Activated CD4-positive, alpha-beta memory T cell treated with anti-CD3 and anti-CD28 coated beads for 36 hours (primary cell): ENCODE measurements at regions of chr10 and their contacts with region 1.

Region 1: DNA sequence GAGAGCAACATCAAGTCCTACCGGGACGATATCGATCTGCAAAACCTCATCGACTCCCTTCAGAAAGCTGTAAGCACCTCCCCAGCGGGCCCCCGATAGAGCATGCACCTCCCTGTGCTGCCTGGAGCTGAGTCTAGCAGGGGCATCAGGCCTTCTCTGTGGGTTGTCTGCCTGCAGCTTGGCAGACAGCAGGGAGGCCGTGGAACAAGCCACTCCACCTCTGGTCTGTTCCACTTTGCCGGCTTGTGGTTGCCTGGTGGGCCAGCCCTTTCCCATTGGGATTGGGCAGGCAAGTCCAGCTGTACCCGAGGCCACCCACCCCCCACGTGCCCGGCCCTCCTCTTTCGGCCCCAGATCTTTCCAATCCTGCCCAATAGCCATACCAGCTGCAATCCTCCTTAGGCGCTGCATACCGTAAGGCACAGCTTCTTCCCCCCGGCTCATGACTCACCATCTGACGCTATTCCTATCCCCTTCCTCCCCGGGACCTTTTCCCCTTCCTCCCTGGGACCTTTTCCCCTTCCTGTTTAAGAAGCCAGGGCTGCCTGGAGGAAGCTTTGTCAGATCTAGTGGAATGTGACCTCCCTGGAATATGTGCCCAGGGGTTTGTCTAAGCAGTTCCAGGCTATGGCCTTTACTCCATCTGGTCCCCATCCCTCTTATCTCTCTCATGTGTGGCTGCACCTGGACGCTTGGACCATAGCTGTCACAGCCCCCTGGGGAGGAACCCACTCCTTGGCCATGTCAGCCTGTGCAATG is 28.1 kb upstream of the SH2D4B start:
- DNase-seq: no peak
- H3K4me3 Mint-ChIP-seq: no peak overlapping the region
- H3K27ac Mint-ChIP-seq: peak overlapping the region; percentile 65
- H3K4me1 Mint-ChIP-seq: peaks cover 32% of the 10 kb centered on the region
- H3K27me3 Mint-ChIP-seq: no peaks in the 10 kb centered on the region

Region 2: DNA sequence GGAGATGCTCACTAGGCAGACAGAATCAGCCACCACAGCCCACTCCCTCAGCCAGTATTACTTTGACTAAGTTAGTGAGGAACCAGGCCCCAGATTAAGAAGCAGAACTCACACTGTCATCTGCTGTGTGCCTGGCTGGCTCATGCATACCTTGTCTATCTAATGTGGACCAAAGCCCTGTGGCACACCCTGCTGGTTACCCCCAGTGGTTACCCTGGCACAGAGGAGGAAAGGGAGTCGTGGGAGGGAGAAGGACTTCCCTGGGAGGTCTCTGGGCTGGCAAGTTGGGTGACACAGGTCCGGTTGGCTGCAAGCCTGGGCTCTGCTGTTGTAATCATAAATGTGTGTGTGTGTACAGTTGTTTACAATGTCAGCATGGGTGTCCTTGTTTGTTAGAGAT is 20.7 kb after region 1 on chr10:
- CTCF ChIA-PET with region 1: interaction called, 9 read pairs
- POLR2A ChIA-PET with region 1: no interaction called
- intact Hi-C with region 1: loop called (anchors 1 kb)
- DNase-seq: peak; percentile 80
- H3K4me3 Mint-ChIP-seq: no peak overlapping the region
- H3K27ac Mint-ChIP-seq: peak overlapping the region; percentile 74
- H3K4me1 Mint-ChIP-seq: peaks cover 66% of the 10 kb centered on the region
- H3K27me3 Mint-ChIP-seq: no peaks in the 10 kb centered on the region

Region 3: GRCh38 chr10:80681142-80681541 is 171.6 kb after region 1 on chr10:
- CTCF ChIA-PET with region 1: no interaction called
- POLR2A ChIA-PET with region 1: no interaction called
- intact Hi-C with region 1: no loop called
- DNase-seq: no peak
- H3K4me3 Mint-ChIP-seq: no peak overlapping the region
- H3K27ac Mint-ChIP-seq: no peak overlapping the region
- H3K4me1 Mint-ChIP-seq: no peaks in the 10 kb centered on the region
- H3K27me3 Mint-ChIP-seq: peaks cover 2% of the 10 kb centered on the region